PC-9 (cell line): ENCODE measurements at regions of chr22 and their contacts with region 1.

Region 1: GRCh38 chr22:37887610-37888378 is 18.3 kb upstream of the MICALL1 start:
- DNase-seq: peak; percentile 93 to 100
- H3K4me3 ChIP-seq: no peak overlapping the region
- H3K27ac ChIP-seq: peak overlapping the region; percentile 62
- H3K4me1 ChIP-seq: peaks cover 37% of the 10 kb centered on the region
- H3K27me3 ChIP-seq: no peaks in the 10 kb centered on the region
- CTCF ChIP-seq: peak; percentile 87

Region 2: GRCh38 chr22:37843741-37843990 is 44.1 kb before region 1 on chr22:
- CTCF ChIA-PET with region 1: interaction called, 10 read pairs
- POLR2A ChIA-PET with region 1: interaction called, 4 read pairs
- intact Hi-C with region 1: no loop called
- DNase-seq: no peak
- H3K4me3 ChIP-seq: peak overlapping the region; percentile 92
- H3K27ac ChIP-seq: peak overlapping the region; percentile 35
- H3K4me1 ChIP-seq: peaks cover 23% of the 10 kb centered on the region
- H3K27me3 ChIP-seq: no peaks in the 10 kb centered on the region
- CTCF ChIP-seq: no peak

Region 3: GRCh38 chr22:37905534-37906363 is 18.0 kb after region 1 on chr22 and contains the start of gene MICALL1:
- CTCF ChIA-PET with region 1: interaction called, 40 read pairs
- POLR2A ChIA-PET with region 1: interaction called, 15 read pairs
- intact Hi-C with region 1: loop called (anchors 1 kb)
- DNase-seq: peak; percentile 63 to 90
- H3K4me3 ChIP-seq: peak within 1 kb of the TSS; percentile 81
- H3K27ac ChIP-seq: peak within 1 kb of the TSS; percentile 99
- H3K4me1 ChIP-seq: peaks cover 41% of the 10 kb centered on the region
- H3K27me3 ChIP-seq: no peaks in the 10 kb centered on the region
- CTCF ChIP-seq: 0 out of 2 replicates have a peak, but pooled peaks have one; percentile 20
- total RNA-seq, gene MICALL1: 113 and 126 TPM in 2 replicates

Region 4: DNA sequence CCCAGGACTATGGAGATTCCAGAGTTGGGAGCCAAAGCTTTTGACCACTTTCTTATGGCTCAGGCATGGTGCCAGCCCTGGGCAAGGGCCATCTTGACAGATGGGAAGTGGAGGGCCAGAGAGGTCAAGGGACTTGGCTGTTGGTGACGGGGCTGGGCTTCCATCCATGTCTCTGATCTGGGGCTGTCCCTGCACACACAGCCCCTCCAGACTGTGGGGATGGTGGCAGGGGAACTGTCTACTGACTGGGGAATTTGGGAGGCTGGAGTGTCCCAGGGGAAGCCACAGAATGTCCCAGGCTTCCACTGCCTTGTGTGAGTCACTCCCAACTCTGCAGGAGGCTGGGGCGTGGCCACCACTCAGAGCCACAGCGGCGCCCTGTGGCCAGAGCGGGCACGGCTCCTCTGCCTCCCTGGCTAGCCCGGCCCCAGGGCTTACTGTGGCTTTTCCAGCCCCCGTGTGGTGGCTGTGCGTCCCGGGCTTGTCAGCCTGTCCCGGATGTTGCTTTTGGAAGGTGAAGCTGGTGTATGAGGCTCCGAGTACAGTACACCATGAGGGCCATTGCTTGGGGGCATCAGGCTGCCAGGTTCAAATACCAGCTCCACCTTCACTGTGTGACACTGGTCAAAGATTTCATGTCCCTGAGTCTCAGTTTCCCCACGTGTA is 46.0 kb after region 1 on chr22:
- CTCF ChIA-PET with region 1: interaction called, 9 read pairs
- POLR2A ChIA-PET with region 1: interaction called, 10 read pairs
- intact Hi-C with region 1: loop called (anchors 1 kb)
- DNase-seq: peak; percentile 87 to 95
- H3K4me3 ChIP-seq: no peak overlapping the region
- H3K27ac ChIP-seq: peak overlapping the region; percentile 17; the same call in 1 of the 2 replicates
- H3K4me1 ChIP-seq: peaks cover 17% of the 10 kb centered on the region
- H3K27me3 ChIP-seq: no peaks in the 10 kb centered on the region
- CTCF ChIP-seq: peak; percentile 97

Region 5: DNA sequence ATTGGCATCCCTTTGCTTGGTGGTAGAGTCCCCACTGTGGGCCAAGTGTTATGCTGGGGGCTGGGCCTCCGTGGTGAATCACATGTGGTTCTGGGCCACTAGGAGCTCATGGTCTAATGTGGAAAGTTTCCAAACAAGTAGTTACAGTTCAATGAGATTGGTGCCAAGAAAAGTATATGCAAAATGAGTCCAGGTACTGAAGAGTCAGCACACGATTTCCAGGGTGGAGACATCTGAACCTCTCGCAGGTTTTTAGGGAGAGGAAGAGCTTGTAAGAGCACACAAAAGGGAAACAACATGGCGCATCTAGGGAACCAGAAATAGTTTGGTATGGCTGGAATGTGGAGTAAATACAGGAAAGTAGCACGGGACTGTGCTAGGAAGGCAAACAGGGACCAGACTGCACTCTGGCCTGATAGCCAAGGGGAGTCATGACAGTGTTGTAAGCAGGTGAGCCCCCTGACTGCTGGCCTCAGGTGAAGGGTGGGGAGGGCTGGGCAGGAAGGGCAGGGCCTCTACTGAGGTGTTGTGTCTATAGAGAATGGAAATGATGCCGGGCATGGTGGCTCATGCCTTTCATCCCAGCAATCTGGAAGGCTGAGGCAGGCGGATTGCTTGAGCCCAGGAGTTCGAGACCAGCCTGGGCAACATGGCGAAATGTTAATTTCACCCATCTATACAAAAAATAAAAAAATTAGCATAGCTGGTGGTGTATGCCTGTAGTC is 78.3 kb after region 1 on chr22:
- CTCF ChIA-PET with region 1: interaction called, 9 read pairs
- POLR2A ChIA-PET with region 1: no interaction called
- intact Hi-C with region 1: loop called (anchors 1 kb)
- DNase-seq: no peak
- H3K4me3 ChIP-seq: no peak overlapping the region
- H3K27ac ChIP-seq: no peak overlapping the region
- H3K4me1 ChIP-seq: no peaks in the 10 kb centered on the region
- H3K27me3 ChIP-seq: no peaks in the 10 kb centered on the region
- CTCF ChIP-seq: no peak